Right ventricle myocardium inferior (tissue), 1 donor: ENCODE measurements at regions of chr2 and their contacts with region 1.

Region 1: DNA sequence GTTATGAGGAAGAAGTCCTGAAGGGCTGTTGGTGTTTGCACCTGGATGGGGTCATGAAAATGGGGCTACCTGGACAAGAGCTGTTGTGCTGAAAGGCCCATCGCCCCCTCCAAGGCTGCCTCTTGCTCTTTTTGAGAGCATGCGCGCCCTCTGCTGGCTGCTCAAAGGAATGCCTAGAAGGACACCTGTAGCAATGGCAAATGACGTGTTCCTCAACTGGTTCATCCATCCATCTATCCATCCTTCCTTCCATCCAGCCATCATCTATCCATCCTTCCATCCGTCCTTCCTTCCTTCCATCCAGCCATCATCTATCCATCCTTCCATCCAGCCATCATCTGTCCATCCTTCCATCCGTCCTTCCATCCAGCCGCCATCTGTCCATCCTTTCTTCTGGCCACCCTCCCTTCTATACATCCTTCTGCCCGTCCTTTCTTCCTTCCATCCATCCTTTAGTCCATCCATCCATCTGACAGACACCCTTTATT is 17.2 kb upstream of the RPL31 start:
- DNase-seq: peak; percentile 90
- ATAC-seq: peak; percentile 66

Region 2: GRCh38 chr2:100606726-100607343 is 378.1 kb before region 1 on chr2:
- intact Hi-C with region 1: loop called (anchors 2 kb)
- DNase-seq: no peak
- ATAC-seq: peak; percentile 32

Region 3: DNA sequence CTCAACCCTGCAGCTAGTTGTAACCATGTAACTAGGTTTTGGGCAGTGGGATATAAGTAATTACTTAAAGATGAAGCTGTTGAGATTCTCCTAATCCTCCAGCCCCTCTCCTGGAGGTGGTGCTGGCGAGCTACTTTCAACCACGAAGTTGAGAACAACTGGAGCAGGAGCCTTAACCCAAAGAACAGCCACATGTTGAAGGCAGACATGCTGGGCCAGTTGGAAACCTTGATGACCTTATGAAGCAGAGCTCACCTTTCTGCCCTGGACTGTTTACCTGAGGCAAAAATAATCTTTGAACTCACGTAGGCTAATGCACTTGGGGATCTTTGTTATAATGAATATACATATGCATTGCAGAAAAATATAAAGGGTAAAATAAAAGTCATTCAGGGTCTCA is 254.6 kb before region 1 on chr2:
- intact Hi-C with region 1: loop called (anchors 1 kb)
- DNase-seq: no peak
- ATAC-seq: peak; percentile 69